Caco-2 (cell line): ENCODE measurements at regions of chr6 and their contacts with region 1.

Region 1: DNA sequence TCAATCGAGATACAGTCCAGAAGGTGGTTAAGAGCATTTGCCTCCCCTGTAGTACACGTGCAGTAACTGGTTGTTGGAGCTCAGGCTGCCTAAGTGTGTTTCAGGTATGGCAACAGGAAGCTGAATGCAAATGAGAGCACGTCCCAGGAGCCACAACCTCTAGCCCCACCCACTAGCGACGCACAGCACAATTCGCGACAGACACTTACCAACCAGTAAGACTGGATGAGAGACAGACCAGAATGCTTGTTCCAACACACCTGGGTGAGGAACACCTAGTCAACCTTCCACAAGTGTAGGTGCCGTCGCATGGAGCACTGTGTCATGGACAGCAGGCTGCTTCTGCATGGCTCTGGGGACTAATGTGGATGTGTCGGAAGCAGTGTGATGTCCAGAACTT is 7.2 kb upstream of the SERPINB1 start:
- DNase-seq: no peak
- H3K4me3 ChIP-seq: no peak overlapping the region
- H3K4me3 Mint-ChIP-seq: no peak overlapping the region
- H3K27ac Mint-ChIP-seq: no peak overlapping the region
- H3K4me1 ChIP-seq: peaks cover 27% of the 10 kb centered on the region
- H3K4me1 Mint-ChIP-seq: peaks cover 16% of the 10 kb centered on the region
- H3K27me3 ChIP-seq: no peaks in the 10 kb centered on the region
- H3K27me3 Mint-ChIP-seq: no peaks in the 10 kb centered on the region
- CTCF ChIP-seq: no peak

Region 2: DNA sequence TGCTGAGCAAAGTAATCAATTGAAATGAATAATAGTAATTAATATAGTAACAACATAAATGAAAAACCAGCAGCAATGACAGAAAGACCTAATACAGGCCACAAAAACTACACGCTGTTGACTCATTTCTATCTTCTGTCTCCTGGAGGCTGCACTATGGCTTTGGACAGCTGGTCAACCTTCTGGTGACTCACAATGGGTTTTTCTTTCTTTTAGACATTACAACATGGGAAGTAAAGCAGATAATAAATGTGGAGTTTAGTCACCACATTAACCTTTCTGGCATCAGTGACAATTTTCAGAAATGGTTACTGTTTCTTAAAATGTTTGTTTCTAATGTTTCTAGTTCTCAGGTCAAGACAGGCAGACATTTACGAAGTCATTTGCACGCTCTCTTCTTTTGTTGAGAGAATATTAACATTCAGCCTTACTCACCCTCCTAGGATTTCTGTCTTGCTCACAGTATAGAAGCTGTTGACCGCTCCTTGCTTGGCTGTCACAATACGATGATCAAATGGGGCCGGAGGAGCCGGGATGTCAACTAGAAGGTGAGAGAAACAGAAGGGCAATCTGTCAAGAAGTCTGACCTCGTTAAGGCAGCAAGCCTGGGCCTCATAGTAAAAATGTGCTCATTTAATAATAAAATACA is 160.3 kb before region 1 on chr6:
- CTCF ChIA-PET with region 1: no interaction called
- POLR2A ChIA-PET with region 1: no interaction called
- intact Hi-C with region 1: no loop called
- DNase-seq: no peak
- H3K4me3 ChIP-seq: no peak overlapping the region
- H3K4me3 Mint-ChIP-seq: no peak overlapping the region
- H3K27ac Mint-ChIP-seq: no peak overlapping the region
- H3K4me1 ChIP-seq: peaks cover 6% of the 10 kb centered on the region; the same call in 1 of the 2 replicates
- H3K4me1 Mint-ChIP-seq: no peaks in the 10 kb centered on the region
- H3K27me3 ChIP-seq: no peaks in the 10 kb centered on the region
- H3K27me3 Mint-ChIP-seq: no peaks in the 10 kb centered on the region
- CTCF ChIP-seq: no peak

Region 3: GRCh38 chr6:2891768-2892170 is 42.9 kb after region 1 on chr6:
- CTCF ChIA-PET with region 1: interaction called, 16 read pairs
- POLR2A ChIA-PET with region 1: interaction called, 3 read pairs
- intact Hi-C with region 1: loop called (anchors 5 kb)
- DNase-seq: peak; percentile 92 to 93
- H3K4me3 ChIP-seq: peak overlapping the region; percentile 71
- H3K4me3 Mint-ChIP-seq: peak overlapping the region; percentile 92
- H3K27ac Mint-ChIP-seq: peak overlapping the region; percentile 80
- H3K4me1 ChIP-seq: peaks cover 8% of the 10 kb centered on the region; the same call in 1 of the 2 replicates
- H3K4me1 Mint-ChIP-seq: peaks cover 10% of the 10 kb centered on the region
- H3K27me3 ChIP-seq: no peaks in the 10 kb centered on the region
- H3K27me3 Mint-ChIP-seq: no peaks in the 10 kb centered on the region
- CTCF ChIP-seq: no peak

Region 4: DNA sequence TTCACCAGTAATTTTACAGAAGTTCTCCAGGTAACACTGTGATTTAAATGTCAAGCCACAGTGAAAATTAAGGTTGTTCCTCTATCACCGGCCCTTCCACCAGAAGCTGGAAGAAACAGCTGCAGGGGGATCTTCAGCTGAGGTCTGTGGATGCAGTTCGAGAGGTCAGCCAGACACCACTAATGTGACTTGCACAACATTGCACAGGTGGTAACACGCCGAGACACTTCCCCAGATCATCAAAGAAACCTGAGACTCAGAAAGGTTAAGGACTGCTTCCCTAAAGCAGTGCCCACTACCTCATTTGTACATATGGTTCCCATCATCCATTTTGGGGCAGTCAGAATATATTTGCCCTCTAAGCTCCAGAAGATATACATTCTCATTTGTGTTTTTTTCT is 62.3 kb after region 1 on chr6:
- CTCF ChIA-PET with region 1: interaction called, 14 read pairs
- POLR2A ChIA-PET with region 1: no interaction called
- intact Hi-C with region 1: loop called (anchors 1 kb)
- DNase-seq: no peak
- H3K4me3 ChIP-seq: no peak overlapping the region
- H3K4me3 Mint-ChIP-seq: no peak overlapping the region
- H3K27ac Mint-ChIP-seq: no peak overlapping the region
- H3K4me1 ChIP-seq: peaks cover 22% of the 10 kb centered on the region
- H3K4me1 Mint-ChIP-seq: peaks cover 46% of the 10 kb centered on the region
- H3K27me3 ChIP-seq: no peaks in the 10 kb centered on the region
- H3K27me3 Mint-ChIP-seq: no peaks in the 10 kb centered on the region
- CTCF ChIP-seq: no peak

Region 5: DNA sequence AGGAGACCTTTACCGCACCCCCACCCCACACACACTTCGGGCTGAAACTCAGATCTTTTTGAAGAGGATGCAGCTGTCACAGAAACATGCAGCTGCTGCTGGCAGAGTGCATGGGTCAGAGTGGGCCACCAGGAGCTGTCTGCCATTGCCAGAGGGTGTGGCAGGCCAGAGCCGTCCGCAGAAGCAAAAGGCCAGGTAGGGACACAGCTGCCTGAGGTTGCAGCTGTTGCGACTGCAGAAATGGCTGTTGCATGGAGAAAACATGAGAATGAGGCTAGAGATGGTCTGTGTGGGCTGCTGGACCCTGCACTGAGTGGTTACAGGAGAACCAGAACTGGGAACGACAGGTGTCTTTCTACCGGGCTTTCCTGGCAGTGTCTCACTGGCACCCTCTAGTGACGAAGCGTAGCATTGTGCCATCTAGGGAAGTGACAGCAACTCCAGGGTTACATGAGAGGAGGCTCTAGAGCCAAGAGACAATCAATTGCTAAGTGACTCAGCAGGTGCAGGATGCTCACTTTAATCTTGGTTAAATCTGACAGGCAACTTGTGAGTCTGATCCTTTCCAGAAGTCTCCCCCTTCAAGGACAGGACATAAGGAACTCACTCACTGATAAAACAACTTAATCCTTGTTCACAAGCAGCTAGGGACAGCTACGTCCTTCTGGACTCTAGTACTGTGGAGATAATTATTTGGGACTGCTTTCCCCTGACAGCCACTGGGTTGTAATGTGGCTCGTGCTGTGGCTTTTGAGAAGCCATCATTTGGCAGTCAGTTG is 83.3 kb after region 1 on chr6:
- CTCF ChIA-PET with region 1: interaction called, 27 read pairs
- POLR2A ChIA-PET with region 1: interaction called, 3 read pairs
- intact Hi-C with region 1: loop called (anchors 1 kb)
- DNase-seq: peak; percentile 85 to 90
- H3K4me3 ChIP-seq: no peak overlapping the region
- H3K4me3 Mint-ChIP-seq: no peak overlapping the region
- H3K27ac Mint-ChIP-seq: no peak overlapping the region
- H3K4me1 ChIP-seq: no peaks in the 10 kb centered on the region
- H3K4me1 Mint-ChIP-seq: peaks cover 11% of the 10 kb centered on the region
- H3K27me3 ChIP-seq: no peaks in the 10 kb centered on the region
- H3K27me3 Mint-ChIP-seq: no peaks in the 10 kb centered on the region
- CTCF ChIP-seq: peak; percentile 91 to 97